Ascending aorta (tissue), 2 donors: ENCODE measurements at regions of chr4 and their contacts with region 1.

Region 1: DNA sequence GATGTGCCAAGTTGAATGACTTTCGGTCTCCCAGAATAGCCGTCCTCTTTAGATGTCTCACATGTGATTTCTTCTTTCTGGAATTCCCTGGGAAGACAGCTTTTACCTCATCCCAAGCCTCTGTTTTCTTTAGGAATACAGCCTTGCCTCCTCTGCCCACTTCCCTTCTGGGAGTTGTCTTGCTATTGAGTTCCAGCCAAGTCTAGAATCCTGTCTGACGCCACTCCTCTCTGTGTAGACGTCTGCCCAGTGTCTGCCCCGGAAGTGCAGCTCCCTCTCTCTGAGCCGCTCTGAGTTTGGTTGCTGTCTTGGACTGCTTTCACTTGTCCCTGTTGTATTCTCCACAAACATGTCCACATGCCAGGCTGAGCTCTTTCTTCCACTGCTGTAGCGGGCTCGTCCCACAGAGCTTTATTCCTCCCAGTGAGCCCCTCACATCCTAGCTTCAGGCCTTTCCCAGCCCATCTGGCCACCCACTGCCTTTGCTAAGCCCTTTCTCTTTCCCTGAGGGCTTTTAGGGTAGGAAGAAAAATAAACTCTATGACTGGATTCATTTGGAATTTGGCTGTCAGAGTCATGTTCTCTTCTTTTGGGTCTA is 9.0 kb upstream of the IGFBP7 start:
- DNase-seq: peak in 1 of 2 donors; percentile 89
- H3K4me3 ChIP-seq: peak overlapping the region; percentile 36 to 59
- H3K27ac ChIP-seq: peak overlapping the region; percentile 89 to 96
- H3K4me1 ChIP-seq: peaks cover 14 to 37% of the 10 kb centered on the region in 2 donors
- H3K27me3 ChIP-seq: no peaks in the 10 kb centered on the region
- CTCF ChIP-seq: no peak

Region 2: GRCh38 chr4:57080781-57081650 is 38.1 kb before region 1 on chr4:
- intact Hi-C with region 1: no loop called
- DNase-seq: peak in 1 of 2 donors; percentile 90
- H3K4me3 ChIP-seq: peak overlapping the region in 1 of 2 donors; percentile 3
- H3K27ac ChIP-seq: peak overlapping the region; percentile 95 to 96
- H3K4me1 ChIP-seq: peaks cover 19 to 68% of the 10 kb centered on the region in 2 donors
- H3K27me3 ChIP-seq: no peaks in the 10 kb centered on the region
- CTCF ChIP-seq: no peak

Region 3: DNA sequence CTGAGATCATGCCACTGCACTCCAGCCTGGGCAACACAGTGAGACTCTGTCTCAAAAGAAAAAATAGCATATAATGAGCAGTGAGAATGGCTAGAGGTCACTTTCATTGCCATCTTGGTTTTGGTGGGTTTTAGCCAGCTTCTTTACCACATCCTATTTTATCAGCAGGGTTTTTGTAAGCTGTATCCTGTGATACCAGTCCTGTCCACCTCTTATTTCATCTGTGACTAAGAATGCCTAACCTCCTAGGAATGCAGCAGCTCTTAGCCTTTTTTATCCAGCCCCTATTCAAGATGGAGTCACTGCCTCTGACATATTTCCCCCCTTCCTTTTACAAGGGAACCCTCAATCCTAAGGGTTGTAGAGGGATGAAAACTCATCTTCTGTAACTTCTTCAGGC is 17.1 kb after region 1 on chr4:
- intact Hi-C with region 1: loop called (anchors 2 kb)
- DNase-seq: no peak
- H3K4me3 ChIP-seq: no peak overlapping the region
- H3K27ac ChIP-seq: no peak overlapping the region
- H3K4me1 ChIP-seq: peaks cover 0 to 8% of the 10 kb centered on the region in 2 donors
- H3K27me3 ChIP-seq: no peaks in the 10 kb centered on the region
- CTCF ChIP-seq: no peak